ENCODE measurements at regions of chr14 and their contacts with region 1.

Region 1: DNA sequence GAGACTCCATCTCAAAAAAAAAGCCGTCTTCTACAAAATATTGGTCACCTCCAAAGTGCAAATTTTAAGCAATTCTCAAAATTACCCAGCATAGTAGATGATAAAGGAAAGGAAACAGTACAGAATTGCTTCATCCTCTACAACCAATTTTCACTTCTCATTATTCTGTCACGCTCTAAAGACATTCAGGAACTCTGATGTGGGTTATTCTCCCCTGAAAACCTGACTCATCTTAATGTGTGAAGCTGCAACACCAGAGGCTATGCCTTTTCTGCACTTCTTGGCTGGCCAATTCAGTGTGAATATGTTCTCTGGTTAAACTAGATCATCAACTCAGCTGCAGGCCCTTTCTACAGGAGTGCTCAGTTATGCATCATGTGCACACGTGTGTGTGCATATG is 11.0 kb downstream of the PTGER2 start:
- DNase-seq: peak; percentile 84
- H3K4me3 Mint-ChIP-seq: peak overlapping the region; percentile 75
- H3K27ac Mint-ChIP-seq: peak overlapping the region; percentile 77
- H3K4me1 Mint-ChIP-seq: peaks cover 76% of the 10 kb centered on the region
- H3K27me3 Mint-ChIP-seq: no peaks in the 10 kb centered on the region

Region 2: GRCh38 chr14:52313903-52314594 is 11.1 kb before region 1 on chr14 and contains the start of gene PTGER2:
- intact Hi-C with region 1: loop called (anchors 1 kb)
- DNase-seq: peak; percentile 97
- H3K4me3 Mint-ChIP-seq: peak within 1 kb of the TSS; percentile 99
- H3K27ac Mint-ChIP-seq: peak within 1 kb of the TSS; percentile 99
- H3K4me1 Mint-ChIP-seq: peaks cover 62% of the 10 kb centered on the region
- H3K27me3 Mint-ChIP-seq: no peaks in the 10 kb centered on the region
- total RNA-seq, gene PTGER2: 66.7 and 69.9 TPM in 2 replicates

Region 3: DNA sequence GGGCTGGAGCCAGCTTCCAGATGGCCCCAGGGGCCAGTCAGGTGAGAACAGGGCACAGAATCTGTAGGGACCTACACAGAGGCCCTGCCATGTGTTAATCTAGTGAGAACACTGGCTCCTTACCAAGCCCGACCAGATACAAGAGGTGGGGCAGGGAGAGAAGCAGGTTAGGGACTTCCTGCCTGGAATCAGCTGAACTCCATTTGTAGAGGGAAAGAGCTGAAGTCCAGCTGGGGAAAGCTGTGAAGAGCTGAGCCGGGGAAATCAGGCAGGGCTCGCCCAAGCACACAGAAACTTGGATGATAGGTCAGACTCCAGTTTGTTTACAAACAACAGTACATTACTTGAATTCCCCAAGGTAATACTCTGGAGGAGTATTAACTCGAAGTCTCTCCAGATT is 35.7 kb after region 1 on chr14:
- intact Hi-C with region 1: no loop called
- DNase-seq: no peak
- H3K4me3 Mint-ChIP-seq: no peak overlapping the region
- H3K27ac Mint-ChIP-seq: no peak overlapping the region
- H3K4me1 Mint-ChIP-seq: peaks cover 16% of the 10 kb centered on the region
- H3K27me3 Mint-ChIP-seq: no peaks in the 10 kb centered on the region

Region 4: GRCh38 chr14:52402812-52403526 is 77.8 kb after region 1 on chr14:
- intact Hi-C with region 1: loop called (anchors 2 kb)
- DNase-seq: peak; percentile 70
- H3K4me3 Mint-ChIP-seq: peak overlapping the region; percentile 28
- H3K27ac Mint-ChIP-seq: peak overlapping the region; percentile 75
- H3K4me1 Mint-ChIP-seq: peaks cover 71% of the 10 kb centered on the region
- H3K27me3 Mint-ChIP-seq: peaks cover 1% of the 10 kb centered on the region

Region 5: DNA sequence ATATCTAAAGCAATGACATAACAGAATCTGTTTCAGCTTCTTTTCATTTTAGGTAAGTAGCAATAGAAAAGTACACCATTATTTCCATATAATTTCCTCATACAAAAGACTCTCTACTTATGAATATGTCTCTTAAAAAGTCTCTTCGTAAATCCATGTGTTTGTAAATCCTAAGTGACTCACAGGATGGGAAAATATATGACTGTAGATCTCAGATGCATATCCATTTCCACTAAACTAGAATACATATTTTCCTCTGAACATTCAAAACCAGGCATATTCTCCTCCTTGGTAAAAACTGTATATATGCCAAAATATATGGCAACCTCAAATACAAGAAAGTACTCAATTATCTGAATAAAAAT is 133.6 kb after region 1 on chr14:
- intact Hi-C with region 1: loop called (anchors 2 kb)
- DNase-seq: no peak
- H3K4me3 Mint-ChIP-seq: no peak overlapping the region
- H3K27ac Mint-ChIP-seq: no peak overlapping the region
- H3K4me1 Mint-ChIP-seq: peaks cover 15% of the 10 kb centered on the region
- H3K27me3 Mint-ChIP-seq: no peaks in the 10 kb centered on the region

Region 6: DNA sequence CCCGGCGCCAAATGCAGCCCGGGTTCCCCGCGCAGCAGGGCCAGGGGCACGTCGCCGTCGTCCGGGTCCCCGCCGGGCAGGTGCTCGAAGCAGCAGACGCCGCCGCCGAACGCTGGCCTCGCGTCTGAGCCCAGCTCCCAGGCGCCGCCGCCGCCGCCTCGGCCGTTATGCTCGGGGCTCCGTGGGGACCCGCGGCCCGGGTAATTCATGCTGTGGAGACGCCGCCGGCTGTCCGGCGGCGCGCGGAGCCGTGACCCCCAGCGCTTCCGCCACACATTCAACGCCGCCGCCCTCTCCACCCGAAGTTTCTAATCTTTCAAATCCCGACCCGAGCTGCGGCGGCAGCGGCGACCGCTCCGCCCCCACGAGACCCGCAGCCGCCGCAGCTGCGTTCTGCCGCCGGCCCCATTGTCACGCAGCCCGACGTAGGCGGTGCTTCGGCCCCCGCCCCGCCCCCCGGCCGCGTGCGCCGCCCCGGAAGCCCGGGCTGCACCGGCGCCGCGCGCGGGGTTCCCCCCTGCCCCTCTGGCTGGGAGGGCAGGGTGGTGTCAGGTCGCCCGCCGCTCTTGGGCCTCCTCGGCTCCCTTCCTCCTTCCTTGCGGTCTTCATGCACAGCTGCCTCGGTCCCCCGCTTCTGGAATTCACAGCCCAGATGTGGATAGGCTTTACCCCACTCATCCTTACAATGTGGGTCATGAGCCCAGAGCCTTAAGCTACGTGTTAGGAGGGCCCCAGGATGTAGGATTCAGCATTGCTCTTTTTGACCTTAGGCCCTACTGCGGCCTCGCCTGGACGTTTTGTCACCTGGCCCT is 828.0 kb after region 1 on chr14 and contains the start of gene DDHD1:
- intact Hi-C with region 1: loop called (anchors 10 kb)
- DNase-seq: peak; percentile 96
- H3K4me3 Mint-ChIP-seq: peak within 1 kb of the TSS; percentile 100
- H3K27ac Mint-ChIP-seq: peak within 1 kb of the TSS; percentile 99
- H3K4me1 Mint-ChIP-seq: peaks cover 44% of the 10 kb centered on the region
- H3K27me3 Mint-ChIP-seq: no peaks in the 10 kb centered on the region
- total RNA-seq, gene DDHD1: 67.9 and 70.2 TPM in 2 replicates

Measured in activated CD4-positive, alpha-beta T cell treated with anti-CD3 and anti-CD28 coated beads, Interleukin-2, amount 10 ng/mL, durations not matched to agents 24 days and 14 days (primary cell).